CD8-positive, alpha-beta memory T cell (primary cell): ENCODE measurements at regions of chr16 and their contacts with region 1.

Region 1: GRCh38 chr16:28277537-28278388 is 14.6 kb upstream of the SBK1 start:
- DNase-seq: peak; percentile 75 to 89 (median 77)
- H3K4me3 ChIP-seq: peak overlapping the region; percentile 86
- H3K4me3 Mint-ChIP-seq: peak overlapping the region; percentile 79 to 91 (median 85)
- H3K27ac ChIP-seq: no peak overlapping the region
- H3K27ac Mint-ChIP-seq: peak overlapping the region; percentile 82 to 97 (median 91)
- H3K4me1 ChIP-seq: peaks cover 37% of the 10 kb centered on the region
- H3K4me1 Mint-ChIP-seq: peaks cover 28 to 44% (median 37%) of the 10 kb centered on the region in 3 donors
- H3K27me3 ChIP-seq: no peaks in the 10 kb centered on the region
- H3K27me3 Mint-ChIP-seq: no peaks in the 10 kb centered on the region

Region 2: GRCh38 chr16:28112883-28113282 is 164.9 kb before region 1 on chr16:
- CTCF ChIA-PET with region 1: no interaction called
- POLR2A ChIA-PET with region 1: no interaction called
- DNase-seq: no peak
- H3K4me3 ChIP-seq: no peak overlapping the region
- H3K4me3 Mint-ChIP-seq: no peak overlapping the region
- H3K27ac ChIP-seq: no peak overlapping the region
- H3K27ac Mint-ChIP-seq: peak overlapping the region in 4 of 8 donors; percentile 52 to 93 (median 72)
- H3K4me1 ChIP-seq: no peaks in the 10 kb centered on the region
- H3K4me1 Mint-ChIP-seq: peaks cover 9 to 23% (median 12%) of the 10 kb centered on the region in 3 donors
- H3K27me3 ChIP-seq: no peaks in the 10 kb centered on the region
- H3K27me3 Mint-ChIP-seq: no peaks in the 10 kb centered on the region

Region 3: GRCh38 chr16:28267356-28267755 is 10.4 kb before region 1 on chr16:
- CTCF ChIA-PET with region 1: interaction called, 10 read pairs
- POLR2A ChIA-PET with region 1: no interaction called
- DNase-seq: no peak
- H3K4me3 ChIP-seq: no peak overlapping the region
- H3K4me3 Mint-ChIP-seq: no peak overlapping the region
- H3K27ac ChIP-seq: no peak overlapping the region
- H3K27ac Mint-ChIP-seq: no peak overlapping the region
- H3K4me1 ChIP-seq: peaks cover 9% of the 10 kb centered on the region
- H3K4me1 Mint-ChIP-seq: peaks cover 2 to 17% (median 12%) of the 10 kb centered on the region in 3 donors
- H3K27me3 ChIP-seq: no peaks in the 10 kb centered on the region
- H3K27me3 Mint-ChIP-seq: peaks cover 11 to 23% of the 10 kb centered on the region in 2 donors

Region 4: DNA sequence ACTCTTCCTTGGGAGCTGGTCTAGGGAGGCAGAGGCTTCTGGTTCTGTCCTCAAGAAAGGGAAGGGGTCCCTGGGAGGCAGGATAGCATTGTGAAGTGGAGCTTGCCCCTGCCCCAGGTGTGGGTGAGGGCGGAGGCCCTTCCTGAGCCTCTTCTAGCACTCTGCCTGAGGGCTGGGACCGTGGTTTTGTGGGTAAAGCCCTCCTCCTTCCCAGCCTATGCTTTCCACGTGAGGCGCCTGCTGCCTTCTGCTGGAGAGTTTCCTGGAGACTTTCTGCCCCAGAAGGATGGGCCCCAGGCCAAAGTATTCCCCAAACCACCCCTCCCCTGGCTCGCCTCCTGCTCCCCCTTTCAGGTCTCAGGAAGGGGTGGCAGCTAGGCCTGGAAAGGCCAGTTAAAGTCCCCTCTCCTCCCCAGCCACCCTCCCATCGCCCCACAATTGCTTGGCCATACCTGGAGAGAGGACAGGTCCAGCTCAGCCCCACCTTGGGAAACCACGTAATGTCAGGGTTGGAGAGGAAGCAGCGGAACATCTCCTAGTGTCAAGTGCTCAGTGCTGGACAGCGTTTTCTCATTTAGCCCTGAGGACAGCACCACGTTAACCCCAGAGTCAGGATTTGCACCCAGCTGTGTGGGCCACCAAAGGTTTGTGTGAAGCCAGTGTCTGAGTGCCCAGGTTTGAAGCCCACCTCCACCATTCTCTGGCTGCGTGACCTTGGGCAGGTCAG is 20.2 kb after region 1 on chr16:
- CTCF ChIA-PET with region 1: interaction called, 27 read pairs
- POLR2A ChIA-PET with region 1: interaction called, 3 read pairs
- DNase-seq: no peak
- H3K4me3 ChIP-seq: peak overlapping the region; percentile 8
- H3K4me3 Mint-ChIP-seq: peak overlapping the region; percentile 62 to 90 (median 79)
- H3K27ac ChIP-seq: no peak overlapping the region
- H3K27ac Mint-ChIP-seq: peak overlapping the region; percentile 85 to 99 (median 90)
- H3K4me1 ChIP-seq: peaks cover 81% of the 10 kb centered on the region
- H3K4me1 Mint-ChIP-seq: peaks cover 73 to 88% (median 85%) of the 10 kb centered on the region in 3 donors
- H3K27me3 ChIP-seq: no peaks in the 10 kb centered on the region
- H3K27me3 Mint-ChIP-seq: no peaks in the 10 kb centered on the region

Region 5: GRCh38 chr16:28317040-28317880 is 39.5 kb after region 1 on chr16:
- CTCF ChIA-PET with region 1: interaction called, 210 read pairs
- POLR2A ChIA-PET with region 1: interaction called, 11 read pairs
- DNase-seq: peak; percentile 61 to 80 (median 68)
- H3K4me3 ChIP-seq: no peak overlapping the region
- H3K4me3 Mint-ChIP-seq: peak overlapping the region in 4 of 7 donors; percentile 33 to 67 (median 60)
- H3K27ac ChIP-seq: no peak overlapping the region
- H3K27ac Mint-ChIP-seq: peak overlapping the region; percentile 61 to 93 (median 84)
- H3K4me1 ChIP-seq: peaks cover 44% of the 10 kb centered on the region
- H3K4me1 Mint-ChIP-seq: peaks cover 23 to 52% (median 26%) of the 10 kb centered on the region in 3 donors
- H3K27me3 ChIP-seq: no peaks in the 10 kb centered on the region
- H3K27me3 Mint-ChIP-seq: no peaks in the 10 kb centered on the region